Activated CD4-positive, alpha-beta T cell treated with anti-CD3 and anti-CD28 coated beads for 36 hours (primary cell): ENCODE measurements at regions of chr2 and their contacts with region 1.

Region 1: DNA sequence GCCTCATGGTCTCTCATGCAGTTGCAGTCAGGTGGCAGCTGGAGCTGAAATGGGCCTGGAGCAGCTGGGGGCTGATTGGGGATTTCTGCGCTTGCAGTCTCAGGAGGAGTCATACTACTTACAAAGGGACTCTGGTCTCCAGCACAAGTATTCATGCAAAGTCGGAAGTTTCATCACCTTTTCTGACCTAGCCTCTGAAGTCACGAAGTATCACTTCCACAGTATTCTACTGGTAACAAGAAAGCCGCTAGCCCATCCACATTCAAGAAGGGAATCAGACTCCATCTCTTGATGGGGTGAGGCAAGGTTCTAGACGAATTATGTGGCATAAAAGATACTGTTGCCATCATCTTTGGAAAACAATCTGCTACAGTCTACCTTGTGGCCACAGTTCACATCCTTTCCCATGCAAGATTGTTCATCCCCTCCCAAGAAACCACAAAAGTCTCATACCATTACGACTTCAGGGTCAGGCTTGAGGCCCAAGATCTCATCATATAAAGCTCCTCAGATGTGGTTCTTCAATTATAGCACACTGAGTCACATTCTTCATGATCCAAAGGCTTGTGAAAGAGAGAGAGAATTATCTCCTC is 95.3 kb downstream of the SMC6 start:
- DNase-seq: peak; percentile 43
- ATAC-seq: peak; percentile 89
- H3K4me3 Mint-ChIP-seq: no peak overlapping the region
- H3K27ac Mint-ChIP-seq: peak overlapping the region; percentile 24
- H3K4me1 Mint-ChIP-seq: peaks cover 19% of the 10 kb centered on the region
- H3K27me3 Mint-ChIP-seq: no peaks in the 10 kb centered on the region

Region 2: GRCh38 chr2:17529771-17530170 is 128.6 kb before region 1 on chr2:
- CTCF ChIA-PET with region 1: no interaction called
- POLR2A ChIA-PET with region 1: no interaction called
- intact Hi-C with region 1: no loop called
- DNase-seq: no peak
- ATAC-seq: no peak
- H3K4me3 Mint-ChIP-seq: no peak overlapping the region
- H3K27ac Mint-ChIP-seq: no peak overlapping the region
- H3K4me1 Mint-ChIP-seq: no peaks in the 10 kb centered on the region
- H3K27me3 Mint-ChIP-seq: peaks cover 7% of the 10 kb centered on the region

Region 3: GRCh38 chr2:17646081-17646554 is 12.2 kb before region 1 on chr2:
- CTCF ChIA-PET with region 1: interaction called, 16 read pairs
- POLR2A ChIA-PET with region 1: no interaction called
- intact Hi-C with region 1: no loop called
- DNase-seq: peak; percentile 67
- ATAC-seq: peak; percentile 84
- H3K4me3 Mint-ChIP-seq: no peak overlapping the region
- H3K27ac Mint-ChIP-seq: no peak overlapping the region
- H3K4me1 Mint-ChIP-seq: peaks cover 19% of the 10 kb centered on the region
- H3K27me3 Mint-ChIP-seq: no peaks in the 10 kb centered on the region